Activated naive CD4-positive, alpha-beta T cell treated with anti-CD3 and anti-CD28 coated beads for 36 hours (primary cell): ENCODE measurements at regions of chr6 and their contacts with region 1.

Region 1: DNA sequence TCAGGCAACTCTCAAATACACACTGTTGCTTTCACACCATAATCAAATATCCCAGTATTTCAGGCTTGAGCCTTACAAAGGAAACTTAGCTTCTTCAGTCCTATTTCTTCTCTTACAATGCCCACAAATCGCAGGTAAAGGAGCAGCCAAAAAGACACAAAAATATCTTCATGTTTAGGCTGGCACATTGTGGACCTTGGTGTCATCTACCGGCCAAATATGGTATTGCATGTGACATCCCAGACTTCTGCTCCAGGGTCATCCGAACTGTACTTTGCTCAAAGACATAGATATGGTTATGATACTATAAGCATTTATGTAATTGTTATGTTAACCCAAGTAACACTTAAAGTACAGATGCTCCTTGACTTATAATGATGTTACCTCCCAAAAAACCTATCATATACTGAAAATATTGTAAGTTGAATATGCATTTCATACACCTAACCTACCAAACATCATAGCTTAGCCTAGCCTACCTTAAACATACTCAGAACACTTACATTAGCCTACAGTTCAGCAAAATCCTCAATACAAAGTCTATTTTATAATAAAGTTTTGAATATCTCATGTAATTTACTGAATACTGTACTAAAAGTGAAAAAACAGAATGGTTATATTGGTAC is 4.6 kb downstream of the OR2H2 start:
- DNase-seq: peak; percentile 74
- H3K4me3 Mint-ChIP-seq: no peak overlapping the region
- H3K27ac Mint-ChIP-seq: no peak overlapping the region
- H3K4me1 Mint-ChIP-seq: no peaks in the 10 kb centered on the region
- H3K27me3 Mint-ChIP-seq: peaks cover 9% of the 10 kb centered on the region

Region 2: GRCh38 chr6:28683944-28684538 is 905.5 kb before region 1 on chr6:
- CTCF ChIA-PET with region 1: no interaction called
- intact Hi-C with region 1: loop called (anchors 2 kb)
- DNase-seq: no peak
- H3K4me3 Mint-ChIP-seq: no peak overlapping the region
- H3K27ac Mint-ChIP-seq: no peak overlapping the region
- H3K4me1 Mint-ChIP-seq: peaks cover 5% of the 10 kb centered on the region
- H3K27me3 Mint-ChIP-seq: peaks cover 73% of the 10 kb centered on the region

Region 3: DNA sequence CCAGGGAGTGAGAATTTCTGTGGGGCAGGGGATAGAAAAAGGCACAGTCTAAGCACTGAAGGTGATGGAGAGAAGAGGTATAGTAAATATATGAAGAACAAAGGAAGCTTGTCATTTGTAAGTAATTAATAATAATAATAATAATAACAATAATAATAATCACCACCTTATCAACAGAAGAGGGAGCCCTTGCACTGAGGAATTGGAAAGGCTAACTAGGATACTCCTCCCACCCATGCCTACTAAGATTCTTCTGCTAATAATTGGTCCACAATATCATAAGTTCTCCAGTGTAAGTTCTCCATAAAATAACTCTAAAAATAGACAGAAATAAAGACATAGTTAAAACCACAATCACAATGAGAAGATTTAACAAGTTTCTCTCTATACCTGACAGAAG is 213.5 kb before region 1 on chr6:
- CTCF ChIA-PET with region 1: interaction called, 4 read pairs
- intact Hi-C with region 1: loop called (anchors 2 kb)
- DNase-seq: no peak
- H3K4me3 Mint-ChIP-seq: no peak overlapping the region
- H3K27ac Mint-ChIP-seq: no peak overlapping the region
- H3K4me1 Mint-ChIP-seq: no peaks in the 10 kb centered on the region
- H3K27me3 Mint-ChIP-seq: peaks cover 17% of the 10 kb centered on the region

Region 4: GRCh38 chr6:29564875-29565274 is 24.7 kb before region 1 on chr6:
- CTCF ChIA-PET with region 1: no interaction called
- intact Hi-C with region 1: no loop called
- DNase-seq: no peak
- H3K4me3 Mint-ChIP-seq: no peak overlapping the region
- H3K27ac Mint-ChIP-seq: no peak overlapping the region
- H3K4me1 Mint-ChIP-seq: peaks cover 11% of the 10 kb centered on the region
- H3K27me3 Mint-ChIP-seq: peaks cover 34% of the 10 kb centered on the region

Region 5: GRCh38 chr6:29602564-29603361 is 13.2 kb after region 1 on chr6:
- CTCF ChIA-PET with region 1: no interaction called
- intact Hi-C with region 1: no loop called
- DNase-seq: peak; percentile 12
- H3K4me3 Mint-ChIP-seq: no peak overlapping the region
- H3K27ac Mint-ChIP-seq: no peak overlapping the region
- H3K4me1 Mint-ChIP-seq: no peaks in the 10 kb centered on the region
- H3K27me3 Mint-ChIP-seq: no peaks in the 10 kb centered on the region